Activated T-helper 1 cell treated with anti-CD3 and anti-CD28 coated beads, Interleukin-12 subunit alpha, Interleukin-12 subunit beta, Interleukin-2, Interleukin-4 antibody, amounts not matched to agents 30 ng/mL and 10 ng/mL and 1 ng/mL, durations not matched to agents 14 hours and 24 hours and 36 hours (primary cell): ENCODE measurements at regions of chr12 and their contacts with region 1.

Region 1: DNA sequence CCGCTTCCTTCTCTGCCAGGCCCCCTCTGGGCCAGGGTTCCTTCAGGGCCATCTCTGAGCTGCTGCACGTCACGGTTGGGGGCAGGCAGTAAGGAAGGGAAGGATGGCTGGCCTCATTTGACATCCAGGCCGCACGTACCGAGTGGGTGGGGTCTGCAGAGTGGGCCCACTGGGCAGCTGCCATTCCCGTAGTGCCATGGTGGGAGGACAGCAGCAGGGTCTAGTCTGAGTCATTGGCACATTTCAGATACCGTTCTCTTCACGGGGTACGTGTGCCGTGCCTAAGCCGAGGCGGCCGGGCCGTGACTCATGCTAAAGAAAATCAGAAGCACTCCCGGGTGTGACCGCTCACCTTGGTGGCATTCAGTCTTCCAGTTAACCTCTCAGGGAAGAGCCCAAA is 43.9 kb downstream of the IL31 start:
- DNase-seq: no peak
- H3K4me3 Mint-ChIP-seq: no peak overlapping the region
- H3K27ac Mint-ChIP-seq: no peak overlapping the region
- H3K4me1 Mint-ChIP-seq: peaks cover 4% of the 10 kb centered on the region
- H3K27me3 Mint-ChIP-seq: no peaks in the 10 kb centered on the region

Region 2: GRCh38 chr12:122054842-122055520 is 75.2 kb before region 1 on chr12:
- intact Hi-C with region 1: loop called (anchors 2 kb)
- DNase-seq: no peak
- H3K4me3 Mint-ChIP-seq: no peak overlapping the region
- H3K27ac Mint-ChIP-seq: no peak overlapping the region
- H3K4me1 Mint-ChIP-seq: no peaks in the 10 kb centered on the region
- H3K27me3 Mint-ChIP-seq: no peaks in the 10 kb centered on the region

Region 3: GRCh38 chr12:122166422-122167349 is 36.5 kb after region 1 on chr12:
- intact Hi-C with region 1: no loop called
- DNase-seq: peak; percentile 48
- H3K4me3 Mint-ChIP-seq: no peak overlapping the region
- H3K27ac Mint-ChIP-seq: no peak overlapping the region
- H3K4me1 Mint-ChIP-seq: peaks cover 34% of the 10 kb centered on the region
- H3K27me3 Mint-ChIP-seq: no peaks in the 10 kb centered on the region

Region 4: DNA sequence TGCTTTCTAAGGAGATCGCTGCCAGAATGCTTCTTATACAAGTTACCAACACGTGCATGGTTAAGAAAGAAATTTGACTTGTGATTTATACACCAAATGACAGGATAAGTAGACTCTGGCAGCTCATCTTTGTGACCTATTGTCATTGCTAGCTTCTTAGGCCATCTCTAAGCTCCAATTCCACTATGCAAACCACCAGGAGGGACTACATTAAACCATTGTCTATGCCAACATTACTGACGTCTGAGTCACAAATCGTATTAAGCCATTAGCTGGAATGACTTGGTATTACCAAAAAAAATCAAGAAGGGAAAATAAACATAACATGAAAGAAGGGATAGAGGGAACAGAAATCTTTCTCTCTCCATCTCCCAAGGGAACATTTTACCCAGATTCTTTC is 151.9 kb after region 1 on chr12:
- intact Hi-C with region 1: no loop called
- DNase-seq: no peak
- H3K4me3 Mint-ChIP-seq: no peak overlapping the region
- H3K27ac Mint-ChIP-seq: no peak overlapping the region
- H3K4me1 Mint-ChIP-seq: no peaks in the 10 kb centered on the region
- H3K27me3 Mint-ChIP-seq: no peaks in the 10 kb centered on the region

Region 5: GRCh38 chr12:122356192-122356635 is 226.1 kb after region 1 on chr12:
- intact Hi-C with region 1: loop called (anchors 2 kb)
- DNase-seq: peak; percentile 36
- H3K4me3 Mint-ChIP-seq: no peak overlapping the region
- H3K27ac Mint-ChIP-seq: no peak overlapping the region
- H3K4me1 Mint-ChIP-seq: peaks cover 6% of the 10 kb centered on the region
- H3K27me3 Mint-ChIP-seq: no peaks in the 10 kb centered on the region